MCF 10A (cell line): ENCODE measurements at regions of chr11 and their contacts with region 1.

Region 1: GRCh38 chr11:1652771-1653540 is 23.4 kb downstream of the KRTAP5-5 start:
- DNase-seq: peak; percentile 52
- H3K4me3 Mint-ChIP-seq: no peak overlapping the region
- H3K27ac Mint-ChIP-seq: no peak overlapping the region
- H3K4me1 Mint-ChIP-seq: peaks cover 4% of the 10 kb centered on the region
- H3K27me3 Mint-ChIP-seq: peaks cover under 1% of the 10 kb centered on the region
- CTCF ChIP-seq: peak; percentile 97

Region 2: GRCh38 chr11:1640076-1640946 is 12.6 kb before region 1 on chr11:
- CTCF ChIA-PET with region 1: interaction called, 29 read pairs
- POLR2A ChIA-PET with region 1: no interaction called
- intact Hi-C with region 1: no loop called
- DNase-seq: peak; percentile 49
- H3K4me3 Mint-ChIP-seq: no peak overlapping the region
- H3K27ac Mint-ChIP-seq: no peak overlapping the region
- H3K4me1 Mint-ChIP-seq: no peaks in the 10 kb centered on the region
- H3K27me3 Mint-ChIP-seq: peaks cover 61% of the 10 kb centered on the region
- CTCF ChIP-seq: peak; percentile 92

Region 3: GRCh38 chr11:1674173-1675131 is 21.5 kb after region 1 on chr11:
- CTCF ChIA-PET with region 1: interaction called, 44 read pairs
- POLR2A ChIA-PET with region 1: no interaction called
- intact Hi-C with region 1: no loop called
- DNase-seq: no peak
- H3K4me3 Mint-ChIP-seq: no peak overlapping the region
- H3K27ac Mint-ChIP-seq: no peak overlapping the region
- H3K4me1 Mint-ChIP-seq: no peaks in the 10 kb centered on the region
- H3K27me3 Mint-ChIP-seq: peaks cover 78% of the 10 kb centered on the region
- CTCF ChIP-seq: no peak

Region 4: GRCh38 chr11:1946812-1947484 is 294.0 kb after region 1 on chr11 and contains the start of gene MRPL23:
- CTCF ChIA-PET with region 1: interaction called, 10 read pairs
- POLR2A ChIA-PET with region 1: no interaction called
- intact Hi-C with region 1: no loop called
- DNase-seq: no peak
- H3K4me3 Mint-ChIP-seq: no peak within 1 kb of the TSS
- H3K27ac Mint-ChIP-seq: no peak within 1 kb of the TSS
- H3K4me1 Mint-ChIP-seq: peaks cover 10% of the 10 kb centered on the region
- H3K27me3 Mint-ChIP-seq: no peaks in the 10 kb centered on the region
- CTCF ChIP-seq: no peak
- total RNA-seq, gene MRPL23: 89.2 and 98.0 TPM in 2 replicates

Region 5: DNA sequence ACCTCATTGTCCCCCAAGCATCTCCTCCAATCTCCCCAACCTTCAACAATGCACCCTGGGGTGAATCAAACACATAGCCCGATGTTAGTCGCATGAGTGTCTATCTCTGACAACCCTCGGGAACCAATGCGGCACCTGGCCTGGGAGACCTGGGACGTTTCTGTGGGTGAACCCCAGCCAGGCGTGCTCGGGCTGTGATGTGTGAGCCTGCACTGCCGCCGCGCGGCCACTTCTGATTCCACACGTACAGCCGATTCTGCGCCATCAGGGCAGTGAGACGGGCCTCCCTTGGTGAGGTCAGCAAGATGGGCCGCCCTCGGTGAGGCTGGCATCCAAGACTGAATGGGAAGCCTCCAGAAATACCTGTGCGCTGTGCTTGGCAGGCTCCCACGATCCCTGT is 349.9 kb after region 1 on chr11:
- CTCF ChIA-PET with region 1: interaction called, 58 read pairs
- POLR2A ChIA-PET with region 1: interaction called, 9 read pairs
- intact Hi-C with region 1: no loop called
- DNase-seq: no peak
- H3K4me3 Mint-ChIP-seq: no peak overlapping the region
- H3K27ac Mint-ChIP-seq: no peak overlapping the region
- H3K4me1 Mint-ChIP-seq: no peaks in the 10 kb centered on the region
- H3K27me3 Mint-ChIP-seq: no peaks in the 10 kb centered on the region
- CTCF ChIP-seq: no peak